T-cell (primary cell): ENCODE measurements at regions of chr2 and their contacts with region 1.

Region 1: DNA sequence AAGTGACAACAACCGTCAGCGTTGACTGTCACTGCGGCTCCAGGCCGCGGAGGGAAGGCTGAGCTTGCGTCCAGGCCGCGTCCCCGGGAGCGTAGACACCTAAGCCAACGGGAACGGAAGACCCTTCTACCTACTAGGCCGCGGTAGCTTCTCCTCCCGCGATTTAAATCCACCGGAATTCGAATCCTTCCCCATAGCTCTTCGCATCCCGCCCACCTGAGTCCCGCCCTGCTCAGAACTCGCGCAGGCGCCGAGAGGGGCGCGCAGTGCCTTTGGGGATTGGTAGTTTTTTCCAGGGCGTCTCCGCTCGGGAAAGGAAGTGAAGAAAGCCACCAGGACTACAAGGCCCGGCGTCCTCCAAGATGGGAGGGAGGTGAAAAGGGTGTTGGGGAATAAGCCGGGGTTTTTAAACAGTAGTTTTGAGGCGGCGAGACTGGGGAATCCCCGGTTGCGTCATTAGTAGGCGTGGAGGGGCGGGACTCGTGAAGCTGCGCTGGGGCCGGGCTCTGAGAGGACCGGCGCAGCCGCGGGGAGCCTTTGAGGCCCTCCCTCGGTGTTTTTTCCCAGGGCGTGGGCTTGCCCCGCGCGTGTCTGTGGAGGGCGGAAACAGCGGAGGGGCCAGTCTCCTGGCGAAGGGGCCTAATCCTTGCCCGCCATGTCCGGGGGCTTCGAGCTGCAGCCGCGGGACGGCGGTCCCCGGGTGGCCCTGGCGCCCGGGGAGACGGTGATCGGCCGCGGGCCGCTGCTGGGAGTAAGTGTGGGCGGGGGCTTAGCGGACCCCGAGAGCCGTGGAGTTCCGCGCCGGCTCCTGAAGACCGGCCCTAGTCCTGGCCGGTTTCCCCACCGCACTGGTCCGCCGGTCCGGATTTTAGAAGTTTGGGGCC is at the starts of genes APLF and FBXO48:
- DNase-seq: peak; percentile 94 to 100 (median 98)
- ATAC-seq: peak; percentile 91 to 94 (median 93)
- H3K4me3 ChIP-seq: peak within 1 kb of the TSS; percentile 96 to 97
- H3K4me3 Mint-ChIP-seq: peak within 1 kb of the TSS; percentile 96 to 98 (median 96)
- H3K27ac ChIP-seq: peak within 1 kb of the TSS; percentile 90
- H3K27ac Mint-ChIP-seq: peak within 1 kb of the TSS; percentile 94 to 95
- H3K4me1 ChIP-seq: peaks cover 17 to 23% of the 10 kb centered on the region in 2 experiments
- H3K4me1 Mint-ChIP-seq: peaks cover 37 to 53% (median 46%) of the 10 kb centered on the region in 3 donors
- H3K27me3 ChIP-seq: no peaks in the 10 kb centered on the region
- H3K27me3 Mint-ChIP-seq: no peaks in the 10 kb centered on the region
- total RNA-seq, gene APLF: 4.3 to 6.1 (median 5.1) TPM
- total RNA-seq, gene FBXO48: 1.8 to 4.5 (median 4.5) TPM

Region 2: GRCh38 chr2:68000170-68000825 is 467.0 kb before region 1 on chr2:
- CTCF ChIA-PET with region 1: no interaction called
- POLR2A ChIA-PET with region 1: no interaction called
- DNase-seq: no peak
- ATAC-seq: no peak
- H3K4me3 ChIP-seq: no peak overlapping the region
- H3K4me3 Mint-ChIP-seq: no peak overlapping the region
- H3K27ac ChIP-seq: no peak overlapping the region
- H3K27ac Mint-ChIP-seq: no peak overlapping the region
- H3K4me1 ChIP-seq: no peaks in the 10 kb centered on the region
- H3K4me1 Mint-ChIP-seq: no peaks in the 10 kb centered on the region
- H3K27me3 ChIP-seq: peaks cover 0 to 9% of the 10 kb centered on the region in 2 experiments
- H3K27me3 Mint-ChIP-seq: peaks cover 19 to 43% of the 10 kb centered on the region in 2 donors

Region 3: GRCh38 chr2:68452168-68452900 is 15.0 kb before region 1 on chr2:
- CTCF ChIA-PET with region 1: interaction called, 5 to 23 read pairs
- POLR2A ChIA-PET with region 1: no interaction called
- DNase-seq: peak in 1 of 35 experiments; percentile 52
- ATAC-seq: peak in 3 of 4 experiments; percentile 24 to 78 (median 55)
- H3K4me3 ChIP-seq: no peak overlapping the region
- H3K4me3 Mint-ChIP-seq: no peak overlapping the region
- H3K27ac ChIP-seq: peak overlapping the region; percentile 14
- H3K27ac Mint-ChIP-seq: peak overlapping the region; percentile 71 to 72
- H3K4me1 ChIP-seq: peaks cover 0 to 6% of the 10 kb centered on the region in 2 experiments
- H3K4me1 Mint-ChIP-seq: peaks cover 21 to 23% (median 22%) of the 10 kb centered on the region in 3 donors
- H3K27me3 ChIP-seq: no peaks in the 10 kb centered on the region
- H3K27me3 Mint-ChIP-seq: no peaks in the 10 kb centered on the region

Region 4: GRCh38 chr2:68594674-68595492 is 127.6 kb after region 1 on chr2:
- CTCF ChIA-PET with region 1: interaction called, 5 to 73 read pairs
- POLR2A ChIA-PET with region 1: interaction called in 1 of 2 experiments, 3 read pairs
- DNase-seq: peak in 32 of 35 experiments; percentile 9 to 75 (median 42)
- ATAC-seq: peak in 2 of 4 experiments; percentile 32 to 45
- H3K4me3 ChIP-seq: no peak overlapping the region
- H3K4me3 Mint-ChIP-seq: no peak overlapping the region
- H3K27ac ChIP-seq: no peak overlapping the region
- H3K27ac Mint-ChIP-seq: no peak overlapping the region
- H3K4me1 ChIP-seq: no peaks in the 10 kb centered on the region
- H3K4me1 Mint-ChIP-seq: peaks cover 7 to 11% (median 8%) of the 10 kb centered on the region in 3 donors
- H3K27me3 ChIP-seq: no peaks in the 10 kb centered on the region
- H3K27me3 Mint-ChIP-seq: peaks cover 2 to 18% of the 10 kb centered on the region in 2 donors

Region 5: GRCh38 chr2:68828887-68829708 is 361.8 kb after region 1 on chr2:
- CTCF ChIA-PET with region 1: interaction called in 1 of 2 experiments, 10 read pairs
- POLR2A ChIA-PET with region 1: no interaction called
- DNase-seq: peak; percentile 45 to 85 (median 72)
- ATAC-seq: peak; percentile 75 to 88 (median 82)
- H3K4me3 ChIP-seq: peak overlapping the region in 1 of 2 donors; percentile 4
- H3K4me3 Mint-ChIP-seq: peak overlapping the region; percentile 64 to 86 (median 64)
- H3K27ac ChIP-seq: peak overlapping the region; percentile 80
- H3K27ac Mint-ChIP-seq: peak overlapping the region; percentile 96 to 99
- H3K4me1 ChIP-seq: peaks cover 23 to 47% of the 10 kb centered on the region in 2 experiments
- H3K4me1 Mint-ChIP-seq: peaks cover 63 to 81% (median 78%) of the 10 kb centered on the region in 3 donors
- H3K27me3 ChIP-seq: no peaks in the 10 kb centered on the region
- H3K27me3 Mint-ChIP-seq: no peaks in the 10 kb centered on the region

Region 6: DNA sequence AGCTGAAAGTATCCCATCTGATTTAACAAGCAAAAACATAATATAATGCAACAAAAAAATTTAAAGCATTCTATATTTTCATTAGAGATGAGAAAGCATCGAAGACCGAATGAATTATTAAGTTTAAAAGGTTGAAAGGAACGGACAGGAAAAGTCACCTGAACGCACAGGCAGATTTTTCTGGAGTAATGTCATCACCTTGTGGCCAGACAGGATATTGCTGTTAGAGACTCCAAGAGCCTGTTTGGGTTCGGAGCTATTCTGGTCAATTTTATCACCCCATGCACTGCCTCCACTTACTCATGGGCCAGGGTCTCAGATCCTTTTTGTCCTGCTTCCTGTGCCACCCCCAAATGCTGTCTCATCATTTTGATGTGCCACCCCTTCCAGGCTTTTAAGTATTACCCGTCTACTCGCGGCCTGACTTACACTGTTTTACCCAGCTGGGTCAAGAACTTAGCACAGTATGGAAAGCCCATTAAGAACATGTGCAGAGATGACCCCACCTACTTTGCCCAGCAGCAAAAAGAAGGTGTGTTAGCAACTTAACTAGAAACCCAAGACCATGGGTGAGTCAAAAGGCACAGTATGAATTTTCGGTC is 458.1 kb after region 1 on chr2:
- CTCF ChIA-PET with region 1: interaction called, 21 to 78 read pairs
- POLR2A ChIA-PET with region 1: no interaction called
- DNase-seq: peak in 30 of 35 experiments; percentile 21 to 83 (median 46)
- ATAC-seq: peak; percentile 68 to 83 (median 71)
- H3K4me3 ChIP-seq: no peak overlapping the region
- H3K4me3 Mint-ChIP-seq: no peak overlapping the region
- H3K27ac ChIP-seq: no peak overlapping the region
- H3K27ac Mint-ChIP-seq: no peak overlapping the region
- H3K4me1 ChIP-seq: no peaks in the 10 kb centered on the region
- H3K4me1 Mint-ChIP-seq: peaks cover 3 to 5% (median 4%) of the 10 kb centered on the region in 3 donors
- H3K27me3 ChIP-seq: peaks cover 0 to 11% of the 10 kb centered on the region in 2 experiments
- H3K27me3 Mint-ChIP-seq: peaks cover 3 to 4% of the 10 kb centered on the region in 2 donors